Endothelial cell of umbilical vein (primary cell): ENCODE measurements at regions of chr11 and their contacts with region 1.

Region 1: DNA sequence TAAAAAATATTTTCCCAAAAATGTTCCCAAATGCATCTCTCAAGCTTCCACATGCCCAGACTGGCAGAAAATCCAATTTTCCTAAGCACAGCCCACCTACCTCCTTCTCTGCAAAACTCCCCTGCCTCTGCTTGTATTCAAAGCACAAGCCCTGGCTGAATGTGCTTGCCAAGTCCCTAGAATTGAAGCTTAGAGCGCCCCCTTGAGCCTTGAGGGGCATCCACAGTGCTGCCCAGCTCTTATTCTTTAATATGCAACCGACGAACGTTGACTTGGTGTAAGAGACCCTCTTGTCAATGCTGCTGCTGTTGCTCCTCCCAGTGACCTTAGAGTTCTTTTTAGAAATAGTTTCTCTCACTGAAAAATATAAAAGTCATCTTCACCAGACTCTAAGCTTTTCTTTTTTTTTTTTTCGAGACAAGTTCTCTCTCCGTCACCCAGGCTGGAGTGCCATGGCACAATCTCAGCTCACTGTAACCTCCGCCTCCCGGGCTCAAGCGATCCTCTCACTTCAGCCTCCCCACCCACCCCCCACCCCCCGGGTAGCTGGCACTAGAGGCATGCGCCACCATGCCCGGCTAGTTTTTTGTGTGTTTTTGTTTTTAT is 63.5 kb upstream of the CAPRIN1 start:
- DNase-seq: peak; percentile 80
- H3K4me3 ChIP-seq: no peak overlapping the region
- H3K27ac ChIP-seq: no peak overlapping the region
- H3K4me1 ChIP-seq: no peaks in the 10 kb centered on the region
- H3K27me3 ChIP-seq: peaks cover 2 to 3% of the 10 kb centered on the region in 2 experiments
- CTCF ChIP-seq: peak; percentile 90 to 91
- POLR2A ChIP-seq: no peak

Region 2: GRCh38 chr11:33835143-33835878 is 152.8 kb before region 1 on chr11:
- CTCF ChIA-PET with region 1: interaction called, 58 read pairs
- POLR2A ChIA-PET with region 1: no interaction called
- dilution Hi-C with region 1: no loop called
- intact Hi-C with region 1: loop called (anchors 1 kb)
- DNase-seq: peak; percentile 37
- H3K4me3 ChIP-seq: no peak overlapping the region
- H3K27ac ChIP-seq: no peak overlapping the region
- H3K4me1 ChIP-seq: peaks cover 4% of the 10 kb centered on the region
- H3K27me3 ChIP-seq: peaks cover 9 to 11% of the 10 kb centered on the region in 2 experiments
- CTCF ChIP-seq: no peak
- POLR2A ChIP-seq: no peak

Region 3: GRCh38 chr11:33857933-33858371 is 130.1 kb before region 1 on chr11:
- CTCF ChIA-PET with region 1: interaction called, 17 read pairs
- POLR2A ChIA-PET with region 1: no interaction called
- dilution Hi-C with region 1: no loop called
- intact Hi-C with region 1: loop called (anchors 1 kb)
- DNase-seq: peak; percentile 85
- H3K4me3 ChIP-seq: no peak overlapping the region
- H3K27ac ChIP-seq: no peak overlapping the region
- H3K4me1 ChIP-seq: no peaks in the 10 kb centered on the region
- H3K27me3 ChIP-seq: no peaks in the 10 kb centered on the region
- CTCF ChIP-seq: peak; percentile 89 to 92
- POLR2A ChIP-seq: no peak

Region 4: DNA sequence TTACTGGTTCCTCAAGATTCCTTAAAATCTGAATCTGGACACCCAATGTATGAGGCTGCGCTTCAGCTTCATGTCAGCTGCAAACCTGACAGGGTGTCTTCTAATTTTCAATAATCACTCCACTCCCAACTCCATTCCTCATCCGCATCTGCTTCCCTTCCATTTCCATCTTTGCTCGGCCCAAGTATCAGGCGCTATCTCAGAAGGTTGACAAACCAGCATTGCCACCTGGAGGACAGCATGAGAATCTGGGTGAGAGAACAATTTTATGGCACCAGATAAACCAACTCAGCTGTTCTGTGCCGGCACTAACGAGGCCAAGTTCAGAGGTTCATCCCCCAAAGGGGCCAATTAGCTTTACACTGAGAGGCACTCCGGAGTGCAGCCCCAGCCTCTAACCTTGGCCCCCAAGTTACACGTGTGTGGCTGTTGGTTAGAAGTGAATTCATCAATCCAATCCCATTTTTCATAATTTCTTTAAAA is 17.1 kb before region 1 on chr11:
- CTCF ChIA-PET with region 1: interaction called, 35 read pairs
- POLR2A ChIA-PET with region 1: no interaction called
- dilution Hi-C with region 1: no loop called
- intact Hi-C with region 1: loop called (anchors 1 kb)
- DNase-seq: peak; percentile 72
- H3K4me3 ChIP-seq: no peak overlapping the region
- H3K27ac ChIP-seq: no peak overlapping the region
- H3K4me1 ChIP-seq: no peaks in the 10 kb centered on the region
- H3K27me3 ChIP-seq: peaks cover 0 to 4% of the 10 kb centered on the region in 2 experiments
- CTCF ChIP-seq: peak; percentile 70 to 74
- POLR2A ChIP-seq: no peak

Region 5: DNA sequence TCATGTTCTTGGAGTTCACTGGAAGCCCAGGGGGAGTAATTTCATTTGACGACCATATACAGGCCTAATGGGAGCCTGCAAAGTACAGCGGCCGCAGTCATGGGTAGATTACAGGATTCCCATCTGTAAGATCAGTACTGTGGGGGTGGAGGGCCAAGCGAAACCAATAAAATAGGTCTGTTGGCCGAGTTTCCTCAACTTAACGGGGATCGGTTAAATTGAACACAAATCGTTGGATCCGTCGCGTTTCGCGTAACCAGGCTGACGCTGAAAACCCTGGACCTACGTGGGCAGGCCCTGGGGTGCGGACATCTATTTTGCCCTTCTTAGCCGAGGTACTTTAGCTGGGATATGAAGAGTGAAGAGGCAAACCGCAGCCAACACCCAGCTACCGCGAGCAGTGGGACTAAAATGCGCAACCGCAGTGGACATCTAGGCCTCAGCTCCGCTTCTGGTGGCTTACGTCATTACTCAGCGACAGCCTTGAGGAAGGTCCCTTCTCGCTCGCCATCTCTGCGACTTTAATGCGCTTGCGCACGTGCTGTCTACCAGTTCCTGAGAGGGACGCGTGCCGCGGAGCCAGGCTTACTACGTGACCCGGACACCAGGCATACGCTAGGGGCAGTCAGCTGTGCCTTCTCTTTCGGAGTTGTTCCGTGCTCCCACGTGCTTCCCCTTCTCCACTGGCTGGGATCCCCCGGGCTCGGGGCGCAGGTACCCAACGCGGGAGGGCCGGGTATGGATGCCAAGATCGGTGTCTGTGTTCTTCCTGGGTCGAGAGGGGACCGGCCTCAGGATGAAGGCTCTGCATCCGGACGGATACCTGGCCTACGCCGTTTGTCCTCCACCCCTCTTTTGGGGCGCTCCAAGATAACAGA is 117.2 kb after region 1 on chr11 and contains the start of gene NAT10:
- CTCF ChIA-PET with region 1: no interaction called
- POLR2A ChIA-PET with region 1: no interaction called
- dilution Hi-C with region 1: no loop called
- intact Hi-C with region 1: no loop called
- DNase-seq: peak; percentile 99
- H3K4me3 ChIP-seq: peak within 1 kb of the TSS; percentile 27 to 79 (median 71)
- H3K27ac ChIP-seq: peak within 1 kb of the TSS; percentile 44
- H3K4me1 ChIP-seq: peaks cover 19% of the 10 kb centered on the region
- H3K27me3 ChIP-seq: no peaks in the 10 kb centered on the region
- CTCF ChIP-seq: peak in 1 of 2 donors; percentile 16
- POLR2A ChIP-seq: peak; percentile 99
- total RNA-seq, gene NAT10: 54.9 and 57.6 TPM in 2 replicates